ENCODE measurements at regions of chr6 and their contacts with region 1.

Region 1: DNA sequence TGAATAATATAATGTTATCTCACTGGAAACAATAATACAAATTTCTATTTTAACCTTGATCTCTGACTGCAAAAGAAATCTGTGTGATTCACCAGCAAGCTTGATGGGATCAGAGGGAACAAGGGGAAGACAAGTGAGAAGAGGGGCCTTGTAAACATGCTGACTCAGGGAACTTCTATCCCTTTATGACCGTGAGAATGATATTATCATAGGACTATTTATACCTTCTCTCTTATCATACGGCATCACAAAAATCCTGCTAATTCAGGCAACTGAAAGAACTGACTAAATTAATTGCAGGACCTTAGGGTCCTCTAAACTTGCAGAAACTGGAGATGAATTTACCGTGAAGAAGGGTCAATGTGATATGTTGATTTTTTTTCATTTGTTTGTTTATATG is 173.3 kb downstream of the PTPRK start:
- DNase-seq: no peak
- CTCF ChIP-seq: no peak

Region 2: DNA sequence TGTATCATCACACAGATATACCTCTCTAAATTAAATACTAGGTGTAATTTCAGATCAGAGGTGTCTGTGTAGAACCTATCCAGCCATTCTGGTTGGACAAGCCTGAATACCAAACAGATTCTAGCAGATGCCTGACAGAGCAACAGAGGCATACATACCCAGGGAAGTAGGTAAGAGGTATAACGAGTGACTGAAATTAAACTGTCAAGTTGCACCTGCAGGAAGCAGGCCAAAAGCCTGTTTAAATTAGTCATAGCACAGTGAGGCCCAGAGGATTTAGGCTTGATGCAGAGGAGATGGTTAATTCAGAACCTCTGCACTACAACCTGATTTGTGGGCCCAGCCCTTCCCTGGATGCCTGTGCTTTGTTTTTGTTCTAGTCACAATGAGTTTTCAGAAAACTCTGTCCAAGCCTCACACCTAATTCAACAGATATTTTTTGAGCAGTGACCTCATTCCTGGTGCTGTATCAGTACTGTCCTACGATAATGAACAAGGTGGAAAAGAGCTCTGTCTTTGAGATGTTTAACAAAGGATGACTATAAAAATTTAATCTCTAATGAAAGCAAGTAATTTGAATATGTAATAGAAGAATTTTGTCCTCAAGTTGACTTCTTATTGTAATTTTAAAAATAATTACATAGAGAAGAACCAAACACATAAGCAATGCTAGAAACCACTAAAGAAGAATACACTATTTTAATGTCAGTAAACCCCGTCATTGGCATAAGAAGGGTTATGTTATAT is 738.4 kb before region 1 on chr6:
- CTCF ChIA-PET with region 1: no interaction called
- POLR2A ChIA-PET with region 1: no interaction called
- DNase-seq: no peak
- CTCF ChIP-seq: no peak

Region 3: DNA sequence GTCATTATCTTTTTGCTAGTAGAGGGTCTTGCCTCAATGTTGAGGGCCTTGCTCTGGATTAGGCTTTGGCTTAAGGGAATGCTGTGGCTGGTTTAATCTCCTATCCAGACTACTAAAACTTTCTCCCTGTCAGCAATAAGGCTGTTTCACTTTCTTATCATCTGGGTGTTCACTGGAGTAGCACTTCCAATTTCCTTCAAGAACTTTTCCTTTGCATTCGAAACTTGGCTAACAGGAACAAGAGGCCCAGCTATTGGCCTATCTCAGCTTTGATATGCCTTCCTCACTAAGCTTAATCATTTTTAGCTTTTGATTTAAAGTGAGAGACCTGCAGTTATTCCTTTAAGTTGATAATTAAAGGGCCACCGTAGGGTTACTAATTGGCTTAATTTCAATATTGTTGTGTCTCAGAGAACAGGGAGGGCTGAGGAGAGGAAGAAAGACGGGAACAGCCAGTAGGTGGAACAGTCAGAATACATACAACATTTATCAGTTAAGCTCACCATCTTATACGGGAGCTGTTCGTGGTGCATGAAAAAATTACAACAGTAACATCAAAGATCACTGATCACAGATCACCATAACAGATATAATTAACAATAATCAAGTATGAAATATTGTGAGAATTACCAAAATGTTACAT is 13.4 kb before region 1 on chr6:
- CTCF ChIA-PET with region 1: no interaction called
- POLR2A ChIA-PET with region 1: no interaction called
- DNase-seq: no peak
- CTCF ChIP-seq: no peak

Region 4: DNA sequence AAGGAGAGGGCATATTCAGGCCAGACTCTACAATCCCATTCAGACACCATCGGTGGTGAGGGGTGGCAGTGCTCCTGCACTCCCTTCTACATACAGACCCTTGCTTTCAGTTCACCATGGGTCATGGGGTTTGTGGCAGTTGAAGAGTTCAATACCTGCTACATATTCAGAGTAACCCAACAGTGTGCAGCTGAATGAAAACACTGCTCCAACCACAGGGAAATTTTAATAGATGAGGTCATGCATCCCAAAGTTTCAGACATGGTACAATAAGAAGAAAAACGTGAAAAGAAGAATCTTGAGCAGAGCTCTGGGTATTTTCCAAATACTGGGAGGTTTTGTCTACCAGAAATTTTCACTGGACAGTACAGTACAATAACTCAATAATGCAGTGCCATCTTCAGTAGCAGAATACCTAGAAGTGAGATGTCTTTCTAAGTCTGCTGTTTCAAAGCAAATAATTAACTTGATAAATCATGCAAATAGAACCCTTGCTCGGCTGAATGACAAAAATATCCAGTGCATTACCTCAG is 11.2 kb after region 1 on chr6:
- CTCF ChIA-PET with region 1: interaction called, 12 read pairs
- POLR2A ChIA-PET with region 1: no interaction called
- DNase-seq: no peak
- CTCF ChIP-seq: no peak

Region 5: DNA sequence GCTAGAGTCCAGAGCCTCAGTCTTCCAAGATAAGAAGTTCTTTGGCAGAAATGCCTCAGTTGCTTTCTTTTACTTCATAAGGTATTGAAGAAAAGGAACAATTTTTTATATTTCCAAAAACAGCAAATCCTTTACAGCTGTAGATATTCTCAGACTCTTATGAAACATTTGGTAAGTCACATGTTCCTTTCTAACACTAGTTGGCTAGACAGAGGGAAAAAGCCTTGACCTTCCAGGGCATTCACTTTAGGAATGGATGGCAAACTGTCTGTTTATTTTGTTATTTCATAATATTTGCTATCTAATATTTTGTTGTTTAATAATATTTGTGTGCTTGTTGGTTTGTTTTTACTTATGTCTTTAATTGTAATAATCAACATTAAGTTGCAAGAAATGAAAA is 32.5 kb after region 1 on chr6:
- CTCF ChIA-PET with region 1: no interaction called
- POLR2A ChIA-PET with region 1: no interaction called
- DNase-seq: no peak
- CTCF ChIP-seq: no peak

Measured in GM10248 (cell line).